Ascending aorta (tissue), 2 donors: ENCODE measurements at regions of chr11 and their contacts with region 1.

Region 1: DNA sequence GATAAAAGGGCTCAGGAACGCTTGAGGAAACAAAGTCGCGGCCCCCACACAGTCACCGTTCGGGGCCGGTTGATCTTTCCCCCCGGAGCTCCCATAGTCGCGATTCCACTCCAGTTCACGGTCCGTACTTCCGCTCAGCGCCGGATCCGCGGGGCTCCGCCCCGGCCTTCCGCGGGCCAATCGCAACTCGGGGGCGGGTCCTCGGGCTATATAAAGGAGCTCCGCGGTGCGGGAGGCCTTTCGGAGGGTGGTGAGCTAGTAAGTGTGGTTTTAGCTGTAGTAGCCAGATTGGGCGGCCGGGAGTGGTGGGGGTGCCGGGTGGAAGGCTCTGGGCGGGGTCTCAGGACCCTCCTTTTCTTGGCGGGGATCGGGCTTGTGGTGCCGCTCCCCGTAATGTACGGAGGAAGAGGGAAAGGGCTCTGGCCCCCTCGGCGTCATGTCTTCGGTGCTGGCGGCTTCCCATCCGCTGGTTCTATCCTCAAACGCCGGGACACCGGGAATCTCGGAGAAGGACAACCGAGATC is at the starts of genes C11orf98 and CSKMT:
- DNase-seq: peak; percentile 82 to 96
- H3K4me3 ChIP-seq: peak within 1 kb of the TSS; percentile 71 to 93
- H3K27ac ChIP-seq: peak within 1 kb of the TSS; percentile 80 to 89
- H3K4me1 ChIP-seq: peaks cover 10 to 20% of the 10 kb centered on the region in 2 donors
- H3K27me3 ChIP-seq: no peaks in the 10 kb centered on the region
- CTCF ChIP-seq: peak in 1 of 3 experiments; percentile 4
- total RNA-seq, gene C11orf98: 49.8 TPM
- total RNA-seq, gene CSKMT: not detected

Region 2: DNA sequence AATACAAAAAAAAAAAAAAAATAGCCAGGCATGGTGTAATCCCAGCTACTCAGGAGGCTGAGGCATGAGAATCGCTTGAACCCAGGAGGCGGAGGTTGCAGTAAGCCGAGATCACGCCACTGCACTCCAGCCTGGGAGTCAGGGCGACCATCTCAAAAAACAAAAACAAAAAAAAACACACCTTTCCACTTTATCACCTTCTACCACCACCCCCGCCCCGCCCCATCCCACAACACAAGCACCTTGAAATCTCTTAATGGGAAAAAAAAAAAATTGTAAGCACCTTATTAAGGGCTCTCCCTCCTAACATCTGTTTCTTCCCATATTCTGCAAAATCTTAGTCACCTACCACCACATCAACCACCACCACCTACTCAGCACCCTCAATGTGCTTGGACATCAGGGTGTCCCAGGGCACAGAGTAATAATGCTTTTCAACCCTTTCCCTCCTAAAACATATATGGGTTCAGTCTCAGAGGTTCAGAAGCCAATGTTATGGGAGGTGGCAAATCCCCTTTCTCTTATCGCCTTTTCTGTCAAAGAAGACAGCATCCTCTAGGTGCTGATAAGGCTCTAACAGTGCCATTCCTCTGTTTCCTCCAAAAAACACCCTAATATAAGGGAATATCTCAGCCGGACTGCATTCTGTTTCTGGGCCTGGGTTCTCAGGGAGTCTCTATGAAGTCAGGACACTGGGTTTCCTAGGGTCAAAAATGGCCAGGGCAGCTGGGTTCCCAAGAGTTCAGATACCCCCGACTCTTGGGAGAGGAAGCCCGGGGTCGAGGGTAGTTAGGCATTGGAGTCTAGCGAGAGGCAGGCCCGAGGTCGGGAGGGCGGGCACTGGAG is 12.8 kb before region 1 on chr11:
- intact Hi-C with region 1: loop called (anchors 1 kb)
- DNase-seq: no peak
- H3K4me3 ChIP-seq: peak overlapping the region; percentile 78 to 96
- H3K27ac ChIP-seq: peak overlapping the region; percentile 93 to 94
- H3K4me1 ChIP-seq: peaks cover 0 to 15% of the 10 kb centered on the region in 2 donors
- H3K27me3 ChIP-seq: no peaks in the 10 kb centered on the region
- CTCF ChIP-seq: no peak